ENCODE measurements at regions of chr2 and their contacts with region 1.

Region 1: DNA sequence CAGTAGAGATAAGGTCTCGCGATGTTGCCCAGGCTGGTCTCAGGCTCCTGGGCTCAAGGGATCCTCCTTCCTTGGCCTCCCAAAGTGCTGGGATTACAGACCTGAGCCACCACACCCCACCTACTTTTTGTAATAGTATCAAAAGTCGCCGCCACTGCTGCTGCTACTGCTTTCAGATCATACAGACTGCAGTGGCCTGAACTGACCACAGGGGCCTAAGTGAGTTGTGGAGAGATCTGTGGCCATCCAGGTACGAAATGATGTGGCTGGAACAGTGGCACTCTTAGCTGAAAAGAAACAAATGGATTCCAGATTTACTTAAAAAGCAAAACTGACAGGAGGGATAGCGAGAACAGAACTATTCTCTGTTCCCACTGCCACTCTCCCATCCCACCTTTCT is 32.9 kb upstream of the POMC start:
- DNase-seq: no peak
- H3K4me3 ChIP-seq: no peak overlapping the region
- H3K27ac ChIP-seq: no peak overlapping the region
- H3K4me1 ChIP-seq: no peaks in the 10 kb centered on the region
- H3K27me3 ChIP-seq: no peaks in the 10 kb centered on the region
- CTCF ChIP-seq: peak in 1 of 2 donors; percentile 21
- POLR2A ChIP-seq: no peak

Region 2: GRCh38 chr2:23658466-23658942 is 1542.8 kb before region 1 on chr2:
- CTCF ChIA-PET with region 1: no interaction called
- POLR2A ChIA-PET with region 1: no interaction called
- dilution Hi-C with region 1: no loop called
- intact Hi-C with region 1: no loop called
- DNase-seq: no peak
- H3K4me3 ChIP-seq: no peak overlapping the region
- H3K27ac ChIP-seq: no peak overlapping the region
- H3K4me1 ChIP-seq: no peaks in the 10 kb centered on the region
- H3K27me3 ChIP-seq: peaks cover 2 to 3% of the 10 kb centered on the region in 2 experiments
- CTCF ChIP-seq: no peak
- POLR2A ChIP-seq: no peak

Region 3: DNA sequence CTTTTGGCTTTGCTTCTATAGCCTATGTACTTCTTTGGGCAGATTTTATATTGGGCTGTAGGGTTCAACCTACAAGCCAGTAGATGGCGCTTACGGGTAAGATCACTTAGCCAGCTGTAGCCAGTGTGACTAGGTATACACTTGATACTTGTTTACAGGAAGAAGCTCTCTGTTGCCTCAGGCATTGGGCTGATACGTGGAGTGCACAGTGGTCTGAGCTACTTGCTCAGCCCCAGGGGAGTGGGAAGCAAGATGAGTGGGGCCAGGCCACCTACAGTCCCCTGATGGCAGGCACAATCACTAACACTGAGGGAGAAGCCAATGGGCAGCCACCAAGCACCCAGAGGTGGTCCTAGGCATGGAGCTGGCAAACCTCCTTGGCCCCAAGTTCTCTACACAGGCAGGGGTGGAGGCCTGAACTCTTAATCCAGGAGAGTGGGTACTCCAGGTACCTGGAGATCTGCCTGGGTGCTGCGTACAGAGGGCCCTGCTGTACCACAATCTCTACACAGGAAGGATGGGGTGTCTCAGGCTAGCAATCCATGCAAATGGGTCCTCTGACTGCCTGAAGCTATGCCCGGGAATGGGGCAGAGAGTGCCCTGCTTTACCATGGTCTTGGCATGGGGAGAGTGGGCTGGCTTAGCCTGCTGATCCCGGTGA is 588.0 kb before region 1 on chr2:
- CTCF ChIA-PET with region 1: interaction called, 5 read pairs
- POLR2A ChIA-PET with region 1: no interaction called
- dilution Hi-C with region 1: no loop called
- intact Hi-C with region 1: loop called (anchors 10 kb)
- DNase-seq: peak; percentile 45
- H3K4me3 ChIP-seq: no peak overlapping the region
- H3K27ac ChIP-seq: no peak overlapping the region
- H3K4me1 ChIP-seq: no peaks in the 10 kb centered on the region
- H3K27me3 ChIP-seq: no peaks in the 10 kb centered on the region
- CTCF ChIP-seq: peak; percentile 49 to 55
- POLR2A ChIP-seq: no peak

Region 4: DNA sequence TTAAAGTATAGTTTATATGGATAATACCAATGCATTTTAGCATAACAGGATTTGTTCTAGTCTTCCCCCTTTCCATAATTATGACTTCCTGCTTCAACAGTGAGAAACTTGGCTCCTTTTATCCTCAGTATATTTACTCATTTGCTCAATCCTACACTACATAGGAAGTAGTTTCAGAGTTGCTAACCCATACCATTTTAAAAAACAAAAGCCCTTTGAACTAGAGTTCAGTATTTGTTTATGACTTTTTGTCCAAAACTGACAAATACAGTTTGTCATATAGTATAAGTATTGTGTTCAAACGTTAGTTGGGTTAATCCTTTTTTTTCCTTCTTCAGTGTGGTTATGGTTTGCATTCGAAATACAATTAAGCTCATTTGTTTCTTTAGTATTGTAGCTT is 223.6 kb before region 1 on chr2:
- CTCF ChIA-PET with region 1: interaction called, 119 read pairs
- POLR2A ChIA-PET with region 1: no interaction called
- dilution Hi-C with region 1: no loop called
- intact Hi-C with region 1: loop called (anchors 1 kb)
- DNase-seq: no peak
- H3K4me3 ChIP-seq: no peak overlapping the region
- H3K27ac ChIP-seq: no peak overlapping the region
- H3K4me1 ChIP-seq: peaks cover 5% of the 10 kb centered on the region
- H3K27me3 ChIP-seq: peaks cover 0 to 4% of the 10 kb centered on the region in 2 experiments
- CTCF ChIP-seq: no peak
- POLR2A ChIP-seq: no peak

Region 5: GRCh38 chr2:25041928-25042320 is 159.3 kb before region 1 on chr2 and contains the start of gene EFR3B:
- CTCF ChIA-PET with region 1: no interaction called
- POLR2A ChIA-PET with region 1: no interaction called
- dilution Hi-C with region 1: no loop called
- intact Hi-C with region 1: loop called (anchors 5 kb)
- DNase-seq: peak; percentile 94
- H3K4me3 ChIP-seq: peak within 1 kb of the TSS; percentile 44 to 75 (median 67)
- H3K27ac ChIP-seq: no peak within 1 kb of the TSS
- H3K4me1 ChIP-seq: peaks cover 21% of the 10 kb centered on the region
- H3K27me3 ChIP-seq: peaks cover 2 to 11% of the 10 kb centered on the region in 2 experiments
- CTCF ChIP-seq: no peak
- POLR2A ChIP-seq: no peak
- total RNA-seq, gene EFR3B: 0.58 and 0.77 TPM in 2 replicates

Region 6: DNA sequence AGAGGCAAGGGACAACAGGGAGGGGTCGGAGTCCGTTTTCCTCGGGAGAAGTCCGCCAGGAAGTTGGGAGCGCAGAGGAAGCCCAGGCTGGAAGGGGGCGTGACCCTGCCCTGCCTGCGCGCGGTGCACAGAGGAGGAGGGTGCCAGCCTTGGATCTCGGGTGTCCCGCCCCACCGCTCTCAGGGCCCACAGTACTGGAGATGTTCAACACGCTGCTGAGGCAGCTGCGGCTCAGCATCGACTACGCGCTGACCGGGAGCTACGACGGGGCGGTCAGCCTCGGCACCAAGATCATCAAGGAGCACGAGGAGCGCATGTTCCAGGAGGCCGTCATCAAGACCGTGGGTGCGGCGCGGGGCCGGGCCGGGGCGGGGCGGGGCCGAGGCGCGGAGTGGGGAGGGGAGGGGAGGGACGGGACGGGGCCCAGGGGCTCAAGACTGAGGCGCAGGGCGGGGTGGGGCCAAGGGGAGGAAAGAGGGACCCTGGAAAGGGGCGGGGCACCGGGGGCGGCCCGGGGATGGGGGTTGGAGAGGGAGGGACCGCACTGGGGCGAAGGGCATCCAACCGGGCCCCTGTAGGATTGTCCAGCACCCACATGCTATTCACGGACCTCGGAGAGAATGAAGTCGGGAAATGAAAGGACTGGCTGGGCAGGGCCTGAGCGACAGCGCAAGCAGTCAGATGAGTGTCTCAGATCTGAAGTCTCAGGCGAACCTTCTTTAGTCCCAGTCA is 69.5 kb before region 1 on chr2:
- CTCF ChIA-PET with region 1: interaction called, 9 read pairs
- POLR2A ChIA-PET with region 1: no interaction called
- dilution Hi-C with region 1: no loop called
- intact Hi-C with region 1: loop called (anchors 1 kb)
- DNase-seq: no peak
- H3K4me3 ChIP-seq: no peak overlapping the region
- H3K27ac ChIP-seq: no peak overlapping the region
- H3K4me1 ChIP-seq: peaks cover 4% of the 10 kb centered on the region
- H3K27me3 ChIP-seq: peaks cover 7 to 24% of the 10 kb centered on the region in 2 experiments
- CTCF ChIP-seq: no peak
- POLR2A ChIP-seq: no peak

Region 7: GRCh38 chr2:25165992-25166875 is 35.0 kb before region 1 on chr2:
- CTCF ChIA-PET with region 1: interaction called, 19 read pairs
- POLR2A ChIA-PET with region 1: no interaction called
- dilution Hi-C with region 1: no loop called
- intact Hi-C with region 1: no loop called
- DNase-seq: no peak
- H3K4me3 ChIP-seq: no peak overlapping the region
- H3K27ac ChIP-seq: no peak overlapping the region
- H3K4me1 ChIP-seq: peaks cover 2% of the 10 kb centered on the region
- H3K27me3 ChIP-seq: peaks cover 67 to 71% of the 10 kb centered on the region in 2 experiments
- CTCF ChIP-seq: peak in 1 of 2 donors; percentile 4
- POLR2A ChIP-seq: no peak

Region 8: DNA sequence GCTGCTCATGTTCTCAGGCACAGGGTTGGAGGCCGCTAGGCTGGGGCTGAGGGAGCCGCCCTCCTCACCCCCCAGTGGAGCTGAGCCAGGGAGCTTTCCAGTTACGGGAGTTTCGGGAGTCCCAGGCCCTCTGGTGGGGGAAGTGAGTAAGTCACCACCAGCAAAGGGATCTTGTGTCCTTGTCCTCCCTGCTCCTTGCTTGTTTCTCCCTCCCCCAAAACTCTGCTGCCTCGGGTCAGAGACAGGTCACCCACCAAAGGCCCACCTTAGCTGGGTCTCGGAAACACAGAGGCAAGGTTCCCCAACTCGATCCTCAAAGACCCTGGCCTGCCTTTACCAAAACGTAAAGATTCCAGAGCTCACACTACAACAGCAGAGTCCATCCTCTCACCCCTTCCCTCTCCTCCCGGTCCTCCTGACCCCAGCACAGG is 27.6 kb after region 1 on chr2:
- CTCF ChIA-PET with region 1: interaction called, 13 read pairs
- POLR2A ChIA-PET with region 1: no interaction called
- dilution Hi-C with region 1: no loop called
- intact Hi-C with region 1: no loop called
- DNase-seq: peak; percentile 72
- H3K4me3 ChIP-seq: no peak overlapping the region
- H3K27ac ChIP-seq: no peak overlapping the region
- H3K4me1 ChIP-seq: no peaks in the 10 kb centered on the region
- H3K27me3 ChIP-seq: no peaks in the 10 kb centered on the region
- CTCF ChIP-seq: peak; percentile 68 to 85
- POLR2A ChIP-seq: no peak